ENCODE measurements at regions of chr2 and their contacts with region 1.

Region 1: GRCh38 chr2:119702918-119703401 is 24.0 kb downstream of the TMEM177 start:
- DNase-seq: peak; percentile 52
- H3K4me3 Mint-ChIP-seq: no peak overlapping the region
- H3K27ac Mint-ChIP-seq: no peak overlapping the region
- H3K4me1 Mint-ChIP-seq: peaks cover 4% of the 10 kb centered on the region
- H3K27me3 Mint-ChIP-seq: peaks cover 4% of the 10 kb centered on the region

Region 2: GRCh38 chr2:119678998-119679710 is 23.8 kb before region 1 on chr2 and contains the start of gene TMEM177:
- intact Hi-C with region 1: loop called (anchors 2 kb)
- DNase-seq: peak; percentile 89
- H3K4me3 Mint-ChIP-seq: peak within 1 kb of the TSS; percentile 88
- H3K27ac Mint-ChIP-seq: peak within 1 kb of the TSS; percentile 79
- H3K4me1 Mint-ChIP-seq: peaks cover 18% of the 10 kb centered on the region
- H3K27me3 Mint-ChIP-seq: peaks cover 3% of the 10 kb centered on the region
- total RNA-seq, gene TMEM177: 16.9 and 17.0 TPM in 2 replicates

Region 3: GRCh38 chr2:119983108-119983507 is 280.1 kb after region 1 on chr2:
- intact Hi-C with region 1: no loop called
- DNase-seq: no peak
- H3K4me3 Mint-ChIP-seq: no peak overlapping the region
- H3K27ac Mint-ChIP-seq: no peak overlapping the region
- H3K4me1 Mint-ChIP-seq: no peaks in the 10 kb centered on the region
- H3K27me3 Mint-ChIP-seq: no peaks in the 10 kb centered on the region

Measured in activated T-helper 2 cell treated with anti-CD3 and anti-CD28 coated beads, Interferon-gamma antibody, Interleukin-2, Interleukin-4, amounts not matched to agents 10 μg/mL and 5 μg/mL and 100 μg/mL, durations not matched to agents 14 hours and 24 hours and 36 hours (primary cell).